ENCODE measurements at regions of chr10 and their contacts with region 1.

Region 1: DNA sequence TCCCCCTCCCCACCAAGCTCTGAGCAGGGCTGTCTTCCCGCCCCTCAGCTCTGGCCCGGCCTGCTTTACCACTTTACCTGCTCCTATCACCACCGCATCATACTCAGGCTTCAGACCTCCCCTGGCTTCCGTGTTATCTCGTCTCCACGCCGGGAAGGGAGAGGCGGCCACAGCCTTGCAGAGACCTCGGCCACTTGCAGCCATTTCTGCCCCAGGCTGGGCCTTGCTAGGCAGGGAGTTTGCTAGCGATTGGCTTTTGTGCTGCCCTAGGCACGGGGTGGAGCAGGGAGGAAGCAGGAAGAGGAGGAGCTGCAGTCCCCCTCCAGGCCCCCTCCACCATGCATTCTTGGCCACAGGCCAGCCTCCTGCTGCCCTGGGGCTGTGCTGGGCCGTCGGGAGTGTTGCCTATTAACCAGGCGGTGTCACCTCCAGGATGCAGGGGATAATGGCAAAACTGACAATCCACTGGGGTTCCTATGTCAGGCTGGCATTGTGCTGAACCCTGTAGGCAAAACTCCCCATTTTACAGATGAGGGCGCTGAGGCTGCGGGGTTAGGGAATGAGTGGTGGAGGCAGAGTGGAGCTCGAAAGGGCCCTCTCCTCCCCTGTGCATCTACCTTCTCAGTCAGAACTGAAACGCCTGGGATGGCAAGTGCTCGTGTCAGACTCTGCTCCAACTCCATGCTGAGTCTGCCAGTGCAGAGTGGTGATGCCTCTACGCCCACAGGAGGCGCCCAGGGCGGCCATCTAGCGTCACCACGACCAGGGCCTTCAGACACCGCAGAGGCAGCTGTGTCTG is at the start of gene PYROXD2:
- DNase-seq: peak; percentile 93 to 96 (median 96)
- ATAC-seq: peak; percentile 95 to 99 (median 98)
- H3K4me3 ChIP-seq: peak within 1 kb of the TSS; percentile 9 to 67 (median 60)
- H3K27ac ChIP-seq: peak within 1 kb of the TSS; percentile 67 to 90 (median 84)
- H3K4me1 ChIP-seq: peaks cover 0 to 50% (median 24%) of the 10 kb centered on the region in 12 donors
- H3K27me3 ChIP-seq: no peaks in the 10 kb centered on the region
- CTCF ChIP-seq: peak in 1 of 12 donors; percentile 12
- POLR2A ChIP-seq: peak in 1 of 2 donors; percentile 78
- total RNA-seq, gene PYROXD2: 5.2 to 22.0 (median 11.1) TPM

Region 2: DNA sequence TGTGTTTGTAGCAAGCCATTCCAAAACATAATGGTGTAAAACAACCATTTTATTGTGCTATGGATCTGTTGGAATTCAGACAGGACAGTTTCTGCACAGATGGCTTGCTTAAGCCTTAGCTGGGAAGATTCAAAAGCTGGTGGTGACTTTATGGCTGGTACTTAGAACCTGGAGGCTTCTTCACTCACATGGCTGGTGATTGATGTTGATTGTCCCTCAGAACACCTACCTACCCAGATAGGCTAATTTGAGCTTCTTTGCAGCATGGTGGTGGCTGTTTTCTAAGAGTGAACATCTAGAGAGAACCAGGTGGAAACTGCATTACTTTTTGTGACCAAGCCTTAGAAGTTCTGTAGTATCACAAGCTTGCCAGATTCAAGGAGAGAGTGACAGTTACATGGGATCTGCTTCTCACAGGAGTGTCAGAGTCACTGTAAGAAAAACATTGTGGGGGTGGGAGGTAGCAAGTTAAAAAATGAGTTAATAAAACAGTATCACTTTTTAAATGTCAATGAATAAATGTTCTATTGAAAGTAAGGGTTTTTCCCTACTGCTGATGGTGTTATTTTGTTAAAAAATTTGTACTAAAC is 273.6 kb before region 1 on chr10:
- intact Hi-C with region 1: loop called in 1 of 10 experiments (anchors 10 kb)
- DNase-seq: no peak
- ATAC-seq: no peak
- H3K4me3 ChIP-seq: no peak overlapping the region
- H3K27ac ChIP-seq: no peak overlapping the region
- H3K4me1 ChIP-seq: peaks cover 0 to 54% (median 24%) of the 10 kb centered on the region in 12 donors
- H3K27me3 ChIP-seq: no peaks in the 10 kb centered on the region
- CTCF ChIP-seq: no peak
- POLR2A ChIP-seq: no peak

Region 3: DNA sequence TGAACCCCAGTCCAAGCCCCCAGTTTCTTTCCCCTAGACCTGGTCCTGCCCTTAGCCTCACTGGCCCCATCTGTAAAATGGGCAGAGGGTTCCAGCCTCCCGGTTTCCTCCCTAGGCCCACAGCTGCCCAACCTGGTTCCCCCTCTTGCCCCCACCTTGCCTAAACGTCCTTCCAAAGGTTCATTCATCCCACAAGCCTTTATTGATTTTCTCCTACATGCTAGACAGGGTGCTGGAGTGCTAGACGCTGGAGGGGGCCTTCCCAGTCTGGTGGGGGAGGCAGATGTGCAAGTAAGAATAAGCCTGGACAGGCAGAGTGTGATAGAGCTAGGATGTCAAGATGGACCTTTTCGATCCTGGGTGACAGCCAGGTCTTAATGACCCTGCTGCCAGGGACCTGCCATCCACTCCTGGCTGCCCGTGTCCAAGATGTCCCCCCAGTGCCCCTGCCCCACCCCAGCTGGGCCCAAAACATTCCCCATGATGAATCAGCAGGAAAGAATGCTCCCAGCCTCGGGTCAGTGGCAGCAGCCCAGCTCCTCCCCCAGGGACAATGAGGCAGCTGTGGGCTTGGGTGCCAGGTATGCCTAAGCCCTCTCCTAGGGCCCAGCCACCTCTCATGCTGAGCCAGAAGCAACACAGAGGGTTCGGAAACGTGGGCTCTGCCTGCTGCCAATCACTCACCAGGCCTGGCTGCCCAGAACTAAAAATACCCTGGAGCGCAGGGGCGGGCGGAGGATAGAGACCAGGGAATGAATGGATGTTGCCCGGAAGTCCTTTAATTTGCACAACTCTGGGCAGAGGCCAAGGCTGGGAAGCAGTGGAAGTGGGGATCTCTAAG is 145.8 kb before region 1 on chr10:
- intact Hi-C with region 1: loop called in 1 of 10 experiments (anchors 5 kb)
- DNase-seq: peak; percentile 84 to 92 (median 86)
- ATAC-seq: peak; percentile 92 to 95 (median 94)
- H3K4me3 ChIP-seq: peak overlapping the region in 7 of 12 donors; percentile 50 to 69 (median 62)
- H3K27ac ChIP-seq: peak overlapping the region; percentile 56 to 89 (median 86)
- H3K4me1 ChIP-seq: peaks cover 0 to 34% (median 22%) of the 10 kb centered on the region in 12 donors
- H3K27me3 ChIP-seq: peaks cover 0 to 18% (median 0%) of the 10 kb centered on the region in 9 donors
- CTCF ChIP-seq: no peak
- POLR2A ChIP-seq: no peak

Measured in heart left ventricle (tissue), 16 donors.